Activated CD4-positive, alpha-beta memory T cell treated with anti-CD3 and anti-CD28 coated beads for 36 hours (primary cell): ENCODE measurements at regions of chr5 and their contacts with region 1.

Region 1: DNA sequence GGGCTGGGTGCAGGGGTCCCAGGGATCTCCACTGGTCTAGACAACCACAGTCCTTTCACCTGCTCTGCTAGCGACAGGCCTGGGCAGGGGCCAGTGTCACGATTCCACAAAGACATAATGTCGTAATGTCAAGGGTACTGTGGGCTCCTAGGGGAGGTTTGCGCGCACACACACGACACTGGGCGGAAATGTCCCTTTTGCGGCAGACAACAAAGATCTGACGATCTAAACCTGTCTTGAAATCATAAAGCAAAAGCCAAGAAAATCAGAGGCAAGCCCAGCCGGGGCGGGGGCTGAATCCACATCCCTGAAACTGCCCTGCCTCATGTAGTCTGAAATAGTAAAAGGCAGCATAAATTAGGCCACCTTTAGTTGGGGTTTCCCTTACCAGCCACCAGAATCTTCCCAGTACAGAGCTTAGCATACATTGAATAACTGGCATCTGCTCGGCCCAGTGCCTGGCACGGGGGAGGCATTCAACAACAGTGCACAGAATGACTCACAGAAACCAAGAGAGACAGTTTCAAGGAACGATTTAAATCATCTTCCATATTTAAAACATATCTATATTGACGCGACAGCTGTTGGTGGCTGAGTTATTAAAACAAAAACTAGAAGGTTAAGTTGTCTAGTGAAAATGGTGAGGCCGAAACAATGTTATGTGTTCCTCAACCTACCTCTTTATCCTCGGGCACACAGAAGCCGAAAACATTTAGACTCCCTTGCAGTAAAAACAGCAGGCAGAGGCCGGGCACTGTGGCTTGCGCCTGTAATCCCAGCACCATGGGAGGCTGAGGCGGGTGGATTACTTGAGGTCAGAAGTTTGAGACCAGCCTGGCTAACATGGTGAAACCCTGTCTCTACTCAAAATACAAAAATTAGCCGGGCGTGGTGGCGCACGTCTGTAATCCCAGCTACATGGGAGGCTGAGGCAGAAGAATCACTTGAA is 151.0 kb downstream of the MYO10 start:
- DNase-seq: peak; percentile 80
- H3K4me3 Mint-ChIP-seq: peak overlapping the region; percentile 42
- H3K27ac Mint-ChIP-seq: peak overlapping the region; percentile 50
- H3K4me1 Mint-ChIP-seq: peaks cover 20% of the 10 kb centered on the region
- H3K27me3 Mint-ChIP-seq: peaks cover 31% of the 10 kb centered on the region

Region 2: GRCh38 chr5:16465544-16466466 is 319.3 kb before region 1 on chr5 and contains the start of gene ZNF622:
- CTCF ChIA-PET with region 1: no interaction called
- POLR2A ChIA-PET with region 1: no interaction called
- intact Hi-C with region 1: loop called (anchors 1 kb)
- DNase-seq: peak; percentile 92
- H3K4me3 Mint-ChIP-seq: peak within 1 kb of the TSS; percentile 98
- H3K27ac Mint-ChIP-seq: peak within 1 kb of the TSS; percentile 96
- H3K4me1 Mint-ChIP-seq: peaks cover 74% of the 10 kb centered on the region
- H3K27me3 Mint-ChIP-seq: no peaks in the 10 kb centered on the region
- total RNA-seq, gene ZNF622: 35.6 to 35.9 TPM

Region 3: DNA sequence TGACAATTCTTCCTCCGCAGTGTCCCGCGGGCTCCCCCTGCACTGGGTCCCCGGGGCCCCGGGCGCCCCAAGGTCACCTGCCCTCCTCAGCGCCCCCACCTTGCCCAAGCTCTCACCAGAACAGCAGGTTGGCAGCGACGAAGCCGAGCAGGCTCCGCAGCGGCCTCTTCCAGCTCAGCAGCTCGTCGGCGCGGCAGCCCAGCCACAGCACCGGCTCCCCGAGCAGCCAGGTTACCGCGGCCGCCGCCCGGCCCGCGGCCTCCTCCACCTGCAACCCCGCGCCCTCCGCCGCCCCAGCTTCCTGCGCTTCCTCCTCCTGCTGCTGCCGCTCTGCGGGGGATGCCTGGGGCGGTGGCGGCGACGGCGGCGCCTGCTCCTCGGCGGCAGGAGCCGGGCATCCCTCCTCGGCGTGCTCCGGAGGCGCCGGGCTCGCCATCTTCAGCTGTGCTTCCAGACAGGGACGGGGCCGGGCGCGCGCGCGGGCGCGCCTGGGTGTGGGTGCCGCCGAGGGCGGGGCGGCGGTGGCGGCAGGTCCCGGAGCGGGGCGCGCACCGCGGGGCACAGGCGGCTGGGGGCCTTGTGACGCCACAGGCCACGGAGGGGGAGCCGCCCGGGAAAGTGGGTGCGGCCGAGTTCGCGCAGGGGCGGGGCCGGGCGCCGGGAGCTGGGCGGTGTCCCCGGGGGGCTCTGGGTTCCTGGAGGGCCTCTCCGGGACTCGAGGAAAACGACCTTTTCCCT is 168.4 kb before region 1 on chr5 and contains the start of gene RETREG1:
- CTCF ChIA-PET with region 1: no interaction called
- POLR2A ChIA-PET with region 1: no interaction called
- intact Hi-C with region 1: loop called (anchors 2 kb)
- DNase-seq: peak; percentile 81
- H3K4me3 Mint-ChIP-seq: peak within 1 kb of the TSS; percentile 95
- H3K27ac Mint-ChIP-seq: peak within 1 kb of the TSS; percentile 83
- H3K4me1 Mint-ChIP-seq: peaks cover 33% of the 10 kb centered on the region
- H3K27me3 Mint-ChIP-seq: no peaks in the 10 kb centered on the region
- total RNA-seq, gene RETREG1: 8.1 to 10.1 TPM

Region 4: DNA sequence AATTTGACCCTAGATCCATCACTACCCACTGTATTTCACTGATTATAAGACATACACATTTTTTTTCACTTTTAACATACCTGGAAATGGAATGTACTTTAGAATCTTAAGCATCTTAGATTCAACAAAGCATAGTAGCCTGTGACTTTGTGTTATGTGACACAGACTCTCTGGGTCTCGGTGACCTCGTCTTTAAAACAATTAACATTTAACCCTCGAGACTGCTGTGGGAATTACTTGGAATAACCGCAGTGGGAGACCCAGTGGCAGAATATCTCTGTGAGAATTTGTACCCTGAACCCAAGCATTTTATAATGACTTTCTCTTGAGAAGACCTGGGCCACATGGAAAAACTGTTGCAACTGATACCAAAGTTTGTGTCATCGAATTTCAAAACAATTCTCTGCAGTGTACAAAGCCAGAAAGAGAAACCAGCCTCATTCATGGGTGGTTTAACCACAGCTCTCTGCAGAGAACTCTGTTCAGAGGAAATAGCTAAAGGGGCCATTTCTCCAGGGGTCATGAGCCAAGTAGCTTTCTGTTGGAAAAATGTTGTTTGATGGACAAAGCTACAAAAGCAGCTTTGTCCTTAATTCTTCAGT is 158.4 kb before region 1 on chr5:
- CTCF ChIA-PET with region 1: no interaction called
- POLR2A ChIA-PET with region 1: no interaction called
- intact Hi-C with region 1: loop called (anchors 1 kb)
- DNase-seq: peak; percentile 38
- H3K4me3 Mint-ChIP-seq: no peak overlapping the region
- H3K27ac Mint-ChIP-seq: peak overlapping the region; percentile 9
- H3K4me1 Mint-ChIP-seq: peaks cover 26% of the 10 kb centered on the region
- H3K27me3 Mint-ChIP-seq: no peaks in the 10 kb centered on the region

Region 5: GRCh38 chr5:16690243-16690852 is 94.8 kb before region 1 on chr5:
- CTCF ChIA-PET with region 1: no interaction called
- POLR2A ChIA-PET with region 1: no interaction called
- intact Hi-C with region 1: loop called (anchors 10 kb)
- DNase-seq: peak; percentile 23
- H3K4me3 Mint-ChIP-seq: no peak overlapping the region
- H3K27ac Mint-ChIP-seq: no peak overlapping the region
- H3K4me1 Mint-ChIP-seq: peaks cover 3% of the 10 kb centered on the region
- H3K27me3 Mint-ChIP-seq: no peaks in the 10 kb centered on the region

Region 6: GRCh38 chr5:16819522-16820167 is 34.5 kb after region 1 on chr5:
- CTCF ChIA-PET with region 1: no interaction called
- POLR2A ChIA-PET with region 1: no interaction called
- intact Hi-C with region 1: no loop called
- DNase-seq: no peak
- H3K4me3 Mint-ChIP-seq: no peak overlapping the region
- H3K27ac Mint-ChIP-seq: no peak overlapping the region
- H3K4me1 Mint-ChIP-seq: no peaks in the 10 kb centered on the region
- H3K27me3 Mint-ChIP-seq: no peaks in the 10 kb centered on the region

Region 7: DNA sequence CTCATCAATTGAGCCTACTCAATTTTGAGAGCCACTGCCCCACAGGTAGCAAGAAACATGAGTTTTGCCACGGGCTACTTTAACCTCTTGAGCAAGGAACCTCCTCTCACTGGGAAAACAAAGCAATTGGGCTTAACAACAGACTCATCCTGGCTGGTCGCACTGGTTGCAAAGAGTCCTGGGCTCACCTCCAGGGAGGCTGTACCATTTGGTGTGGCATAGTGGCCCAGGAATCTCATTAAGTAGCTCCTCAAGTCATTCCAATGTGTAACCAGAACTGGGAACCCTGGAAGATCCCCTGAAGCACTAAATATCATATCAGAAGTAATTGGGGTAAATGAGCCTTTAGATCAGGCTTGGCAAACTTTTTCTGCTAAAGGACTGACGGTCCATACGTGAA is 72.5 kb after region 1 on chr5:
- CTCF ChIA-PET with region 1: no interaction called
- POLR2A ChIA-PET with region 1: no interaction called
- intact Hi-C with region 1: no loop called
- DNase-seq: no peak
- H3K4me3 Mint-ChIP-seq: no peak overlapping the region
- H3K27ac Mint-ChIP-seq: no peak overlapping the region
- H3K4me1 Mint-ChIP-seq: no peaks in the 10 kb centered on the region
- H3K27me3 Mint-ChIP-seq: no peaks in the 10 kb centered on the region

Region 8: DNA sequence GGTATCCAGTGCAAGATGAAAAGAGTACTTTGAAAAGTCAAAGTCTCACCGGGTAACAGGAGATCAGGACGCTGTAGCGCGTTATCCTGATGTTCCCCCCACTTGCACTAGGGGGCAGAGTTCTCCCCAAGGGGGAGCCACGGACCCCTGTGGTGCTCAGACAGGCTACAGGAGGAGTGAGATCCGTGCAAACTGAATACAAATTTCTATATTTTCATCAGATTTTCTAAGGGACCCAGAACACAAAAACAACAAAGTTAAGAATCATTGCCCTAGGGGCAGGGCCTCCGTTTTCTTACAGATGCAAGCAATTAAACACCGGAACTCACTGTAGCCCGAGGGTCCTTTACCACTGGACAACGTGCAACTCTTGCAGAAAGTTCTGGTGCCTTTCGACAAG is 149.0 kb after region 1 on chr5:
- CTCF ChIA-PET with region 1: no interaction called
- POLR2A ChIA-PET with region 1: no interaction called
- intact Hi-C with region 1: loop called (anchors 1 kb)
- DNase-seq: peak; percentile 53
- H3K4me3 Mint-ChIP-seq: no peak overlapping the region
- H3K27ac Mint-ChIP-seq: no peak overlapping the region
- H3K4me1 Mint-ChIP-seq: peaks cover 17% of the 10 kb centered on the region
- H3K27me3 Mint-ChIP-seq: peaks cover 57% of the 10 kb centered on the region

Region 9: GRCh38 chr5:17180957-17181723 is 396.0 kb after region 1 on chr5:
- CTCF ChIA-PET with region 1: no interaction called
- POLR2A ChIA-PET with region 1: no interaction called
- intact Hi-C with region 1: loop called (anchors 1 kb)
- DNase-seq: peak; percentile 31
- H3K4me3 Mint-ChIP-seq: no peak overlapping the region
- H3K27ac Mint-ChIP-seq: peak overlapping the region; percentile 44
- H3K4me1 Mint-ChIP-seq: peaks cover 2% of the 10 kb centered on the region
- H3K27me3 Mint-ChIP-seq: peaks cover 3% of the 10 kb centered on the region

Region 10: GRCh38 chr5:17218353-17219005 is 433.4 kb after region 1 on chr5:
- CTCF ChIA-PET with region 1: no interaction called
- POLR2A ChIA-PET with region 1: no interaction called
- intact Hi-C with region 1: no loop called
- DNase-seq: no peak
- H3K4me3 Mint-ChIP-seq: peak overlapping the region; percentile 43
- H3K27ac Mint-ChIP-seq: no peak overlapping the region
- H3K4me1 Mint-ChIP-seq: peaks cover 11% of the 10 kb centered on the region
- H3K27me3 Mint-ChIP-seq: peaks cover 44% of the 10 kb centered on the region